ENCODE measurements at regions of chr12 and their contacts with region 1.

Region 1: DNA sequence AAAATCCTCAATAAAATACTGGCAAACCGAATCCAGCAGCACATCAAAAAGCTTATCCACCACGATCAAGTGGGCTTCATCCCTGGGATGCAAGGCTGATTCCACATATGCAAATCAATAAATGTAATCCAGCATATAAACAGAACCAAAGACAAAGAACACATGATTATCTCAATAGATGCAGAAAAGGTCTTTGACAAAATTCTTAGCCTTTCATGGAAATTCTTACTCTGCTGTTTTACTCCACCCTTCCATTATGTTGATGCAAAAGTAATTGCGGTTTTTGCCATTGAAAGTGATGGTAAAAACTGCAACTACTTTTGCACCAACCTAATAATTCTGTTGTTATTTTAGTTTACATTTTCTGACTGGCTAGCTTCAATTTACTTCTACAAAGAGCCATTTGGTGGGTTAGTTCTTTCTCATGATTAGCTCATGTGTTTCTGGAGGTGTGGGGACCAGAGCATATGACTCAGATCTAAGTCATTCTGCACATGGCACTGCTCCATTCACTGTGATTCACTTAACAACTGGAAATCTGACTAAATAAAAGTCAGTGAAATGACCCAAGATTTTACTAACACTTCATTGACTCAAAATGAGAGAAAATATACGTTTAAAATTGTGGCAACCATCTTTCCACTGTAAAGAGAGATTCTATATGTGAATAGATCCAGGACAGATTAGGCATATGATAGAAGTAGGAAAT is 99.9 kb downstream of the TMTC3 start:
- DNase-seq: no peak
- ATAC-seq: peak; percentile 78
- H3K4me3 ChIP-seq: no peak overlapping the region
- H3K27ac ChIP-seq: peak overlapping the region in 1 of 2 donors; percentile 18
- H3K4me1 ChIP-seq: no peaks in the 10 kb centered on the region
- H3K27me3 ChIP-seq: no peaks in the 10 kb centered on the region

Region 2: GRCh38 chr12:88299567-88300101 is 57.6 kb after region 1 on chr12:
- intact Hi-C with region 1: loop called in 1 of 2 experiments (anchors 10 kb)
- DNase-seq: peak in 1 of 2 donors; percentile 49
- ATAC-seq: no peak
- H3K4me3 ChIP-seq: no peak overlapping the region
- H3K27ac ChIP-seq: no peak overlapping the region
- H3K4me1 ChIP-seq: no peaks in the 10 kb centered on the region
- H3K27me3 ChIP-seq: no peaks in the 10 kb centered on the region

Measured in aorta (tissue), 5 donors.